ENCODE measurements at regions of chr3 and their contacts with region 1.

Region 1: DNA sequence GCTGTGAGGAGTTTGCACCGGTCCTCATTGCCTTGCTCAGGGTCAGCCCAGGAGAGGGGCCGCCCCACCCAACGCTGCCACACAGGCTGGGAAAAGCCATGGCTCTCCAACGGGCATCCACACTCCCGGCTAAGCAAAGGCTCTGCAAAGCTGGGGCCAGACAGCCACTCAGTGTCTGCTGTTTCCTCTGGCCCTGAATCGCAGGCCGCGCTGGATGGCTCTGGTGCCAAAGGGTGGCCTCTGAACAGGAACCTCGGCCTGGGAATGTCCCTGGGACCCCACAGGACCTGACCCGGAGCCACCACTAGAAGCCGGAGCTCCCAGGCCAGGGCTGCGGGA is 42.9 kb downstream of the RPN1 start:
- DNase-seq: no peak
- H3K4me3 ChIP-seq: peak overlapping the region; percentile 51 to 74
- H3K27ac ChIP-seq: peak overlapping the region; percentile 66 to 78
- H3K4me1 ChIP-seq: peaks cover 3 to 5% of the 10 kb centered on the region in 2 donors
- H3K27me3 ChIP-seq: no peaks in the 10 kb centered on the region
- CTCF ChIP-seq: no peak

Region 2: GRCh38 chr3:128075516-128076482 is 531.9 kb before region 1 on chr3:
- intact Hi-C with region 1: loop called (anchors 1 kb)
- DNase-seq: peak in 1 of 2 donors; percentile 91
- H3K4me3 ChIP-seq: peak overlapping the region; percentile 57 to 71
- H3K27ac ChIP-seq: peak overlapping the region; percentile 9 to 53
- H3K4me1 ChIP-seq: peaks cover 0 to 15% of the 10 kb centered on the region in 2 donors
- H3K27me3 ChIP-seq: no peaks in the 10 kb centered on the region
- CTCF ChIP-seq: peak; percentile 91 to 97 (median 96)

Region 3: DNA sequence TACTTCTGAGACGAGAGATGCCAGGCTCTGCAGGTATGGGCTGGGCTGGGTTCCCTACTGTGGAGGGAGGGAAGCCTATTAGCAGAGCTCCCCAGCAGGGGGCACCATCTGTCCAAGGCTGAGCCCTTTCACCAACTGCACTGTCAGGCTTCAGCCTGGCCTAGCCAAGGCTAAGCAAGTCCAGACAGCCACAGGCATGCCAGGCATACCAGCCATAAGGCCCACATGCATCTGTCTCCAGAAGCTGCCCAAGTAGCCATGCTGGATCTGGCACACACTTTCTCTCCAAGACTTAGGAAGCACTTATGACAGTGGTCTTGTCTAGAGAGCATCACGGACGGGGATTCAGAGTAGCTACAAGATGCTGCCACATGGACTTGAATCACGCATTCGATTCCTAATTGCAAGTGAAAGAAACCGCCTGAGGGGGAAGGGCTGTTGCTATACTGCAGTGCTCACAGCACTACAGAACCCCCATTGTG is 512.4 kb before region 1 on chr3:
- intact Hi-C with region 1: loop called (anchors 5 kb)
- DNase-seq: peak in 1 of 2 donors; percentile 83
- H3K4me3 ChIP-seq: no peak overlapping the region
- H3K27ac ChIP-seq: no peak overlapping the region
- H3K4me1 ChIP-seq: peaks cover 0 to 3% of the 10 kb centered on the region in 2 donors
- H3K27me3 ChIP-seq: no peaks in the 10 kb centered on the region
- CTCF ChIP-seq: peak; percentile 70 to 72 (median 70)

Region 4: GRCh38 chr3:128170805-128171516 is 436.7 kb before region 1 on chr3:
- intact Hi-C with region 1: loop called (anchors 2 kb)
- DNase-seq: no peak
- H3K4me3 ChIP-seq: no peak overlapping the region
- H3K27ac ChIP-seq: no peak overlapping the region
- H3K4me1 ChIP-seq: no peaks in the 10 kb centered on the region
- H3K27me3 ChIP-seq: no peaks in the 10 kb centered on the region
- CTCF ChIP-seq: peak; percentile 47 to 66 (median 63)

Region 5: GRCh38 chr3:128426128-128426921 is 181.4 kb before region 1 on chr3:
- intact Hi-C with region 1: loop called (anchors 1 kb)
- DNase-seq: no peak
- H3K4me3 ChIP-seq: peak overlapping the region; percentile 28 to 53
- H3K27ac ChIP-seq: no peak overlapping the region
- H3K4me1 ChIP-seq: peaks cover 0 to 2% of the 10 kb centered on the region in 2 donors
- H3K27me3 ChIP-seq: no peaks in the 10 kb centered on the region
- CTCF ChIP-seq: peak; percentile 57 to 95 (median 72)

Region 6: DNA sequence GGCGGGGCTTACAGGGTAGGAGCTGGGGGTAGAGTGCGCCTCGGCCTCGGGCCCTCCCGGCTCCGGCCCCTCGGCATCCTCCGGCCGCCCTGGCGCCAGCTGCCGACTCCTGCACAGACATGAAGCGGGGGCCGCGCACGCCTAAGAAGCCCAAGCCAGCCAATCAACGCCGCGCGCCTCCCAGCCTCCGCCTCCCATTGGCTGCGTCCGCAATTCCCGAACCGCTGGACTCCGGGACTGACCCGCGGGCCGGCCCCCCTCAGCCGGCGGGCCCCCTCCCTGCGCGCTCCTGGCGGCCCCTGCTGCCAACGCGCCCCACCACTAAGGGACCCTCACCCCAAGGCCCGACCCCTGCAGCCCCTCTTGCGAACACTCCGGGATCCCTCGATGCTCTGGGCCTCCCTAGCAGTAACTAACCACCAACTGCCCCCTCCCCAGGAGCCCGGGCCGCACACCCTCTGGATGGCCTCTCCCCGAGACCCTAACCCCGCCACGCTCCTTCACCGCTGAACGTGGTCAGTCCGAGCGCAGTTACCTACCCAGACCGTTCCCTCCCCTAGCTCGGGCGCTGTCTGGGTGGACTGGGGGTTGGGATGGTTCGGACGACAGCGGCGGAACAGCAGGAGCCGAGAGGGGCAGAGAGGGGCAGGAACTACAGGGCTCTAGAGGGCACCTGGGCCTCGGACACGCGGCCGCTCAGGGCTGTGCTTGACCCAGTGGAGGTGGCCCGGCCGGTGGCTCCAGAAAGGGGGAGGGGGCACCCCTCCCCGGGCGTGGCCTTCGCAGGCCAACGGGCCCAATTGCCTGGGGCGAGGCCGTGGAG is 119.7 kb before region 1 on chr3:
- intact Hi-C with region 1: loop called (anchors 5 kb)
- DNase-seq: peak in 1 of 2 donors; percentile 83
- H3K4me3 ChIP-seq: peak overlapping the region; percentile 47 to 71
- H3K27ac ChIP-seq: peak overlapping the region in 1 of 2 donors; percentile 20
- H3K4me1 ChIP-seq: peaks cover 23 to 45% of the 10 kb centered on the region in 2 donors
- H3K27me3 ChIP-seq: peaks cover 70% of the 10 kb centered on the region
- CTCF ChIP-seq: no peak